ENCODE measurements at regions of chr19 and their contacts with region 1.

Region 1: DNA sequence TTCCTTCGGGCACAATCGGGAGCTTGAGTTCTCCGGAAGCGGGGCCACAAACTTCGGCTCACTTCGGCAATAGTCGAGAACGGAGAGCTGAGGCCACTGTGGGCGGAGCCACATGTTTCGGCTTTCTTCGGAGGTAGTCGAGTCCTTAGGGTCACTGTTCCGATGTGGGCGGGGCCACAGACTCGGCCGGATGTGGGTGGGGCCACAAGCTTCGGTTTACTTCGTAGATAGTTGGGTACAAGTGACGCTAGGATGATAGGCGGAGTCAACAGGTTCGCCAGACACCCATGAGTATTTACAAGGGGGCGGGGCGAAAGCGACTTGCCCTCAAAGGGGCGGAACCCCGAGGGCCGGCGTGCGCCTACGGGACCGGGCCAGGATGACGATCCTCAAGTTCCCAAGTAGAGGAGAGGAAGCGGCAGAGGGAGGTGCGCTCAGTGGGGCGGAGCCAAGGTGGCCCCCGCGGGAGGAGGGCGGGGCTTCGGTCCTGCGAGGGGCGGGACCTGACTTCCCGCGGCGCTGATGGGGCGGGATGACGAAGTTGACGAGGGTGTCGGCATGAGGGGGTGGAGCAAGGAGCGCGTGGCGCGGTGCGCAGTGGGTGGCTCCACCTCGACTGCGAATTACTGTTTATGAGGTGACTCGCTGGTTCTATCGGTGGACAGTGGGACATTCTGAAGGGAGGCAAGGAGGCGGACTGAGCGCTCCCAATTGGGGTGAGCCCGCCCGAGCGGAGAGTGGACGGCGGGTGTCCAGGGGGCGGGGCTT is 539 bp upstream of the MBOAT7 start:
- DNase-seq: peak; percentile 100
- ATAC-seq: peak; percentile 69
- H3K4me3 Mint-ChIP-seq: peak overlapping the region; percentile 76
- H3K27ac Mint-ChIP-seq: peak overlapping the region; percentile 96
- H3K4me1 Mint-ChIP-seq: peaks cover 34% of the 10 kb centered on the region
- H3K27me3 Mint-ChIP-seq: no peaks in the 10 kb centered on the region

Region 2: DNA sequence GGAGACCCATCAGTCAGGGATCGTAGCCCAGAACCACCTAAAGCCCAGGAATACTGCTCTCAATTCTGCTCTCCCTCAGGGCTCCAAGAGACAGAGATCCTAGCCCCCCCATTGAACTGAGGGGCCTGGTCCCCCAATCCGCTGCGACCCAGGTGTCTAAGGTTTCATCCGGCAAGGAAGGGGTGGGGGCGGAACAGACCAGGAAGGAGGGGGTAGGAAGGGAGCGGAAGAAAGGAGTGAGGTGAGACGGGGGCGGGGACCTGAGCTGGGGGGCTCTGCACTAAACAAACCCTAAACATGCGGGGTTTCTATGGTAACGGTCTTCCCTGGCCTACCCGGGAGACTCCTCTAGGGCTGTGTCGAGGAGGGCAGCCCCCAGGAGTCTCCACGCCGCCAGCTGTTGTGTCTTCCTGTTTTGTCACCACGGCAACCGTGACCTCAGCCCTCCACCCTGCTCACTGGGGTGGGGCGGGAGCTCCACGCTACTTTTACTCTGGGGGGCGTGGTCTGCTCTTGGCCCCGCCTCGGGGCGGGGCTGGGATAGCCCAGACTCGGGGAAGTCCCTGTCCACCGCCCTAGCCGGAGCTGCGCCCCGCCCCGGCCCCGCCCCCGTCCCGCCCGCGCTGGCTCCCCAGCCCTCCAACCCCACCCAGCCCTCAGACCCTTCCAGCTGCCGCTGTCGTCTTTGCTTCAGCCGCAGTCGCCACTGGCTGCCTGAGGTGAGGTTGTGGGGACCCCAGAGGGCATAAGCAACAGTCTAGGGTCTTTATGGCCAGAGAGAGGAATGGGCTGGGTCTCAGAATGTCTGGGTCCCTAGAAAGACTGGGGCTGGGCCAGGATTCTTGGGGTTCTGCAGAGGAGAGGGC is 322.5 kb before region 1 on chr19 and contains the start of gene MYADM:
- CTCF ChIA-PET with region 1: no interaction called
- POLR2A ChIA-PET with region 1: interaction called, 3 read pairs
- intact Hi-C with region 1: loop called (anchors 1 to 5 kb)
- DNase-seq: peak; percentile 99
- ATAC-seq: peak; percentile 71
- H3K4me3 Mint-ChIP-seq: peak within 1 kb of the TSS; percentile 91
- H3K27ac Mint-ChIP-seq: peak within 1 kb of the TSS; percentile 88
- H3K4me1 Mint-ChIP-seq: peaks cover 32% of the 10 kb centered on the region
- H3K27me3 Mint-ChIP-seq: no peaks in the 10 kb centered on the region
- total RNA-seq, gene MYADM: 46.4 to 54.6 TPM

Region 3: DNA sequence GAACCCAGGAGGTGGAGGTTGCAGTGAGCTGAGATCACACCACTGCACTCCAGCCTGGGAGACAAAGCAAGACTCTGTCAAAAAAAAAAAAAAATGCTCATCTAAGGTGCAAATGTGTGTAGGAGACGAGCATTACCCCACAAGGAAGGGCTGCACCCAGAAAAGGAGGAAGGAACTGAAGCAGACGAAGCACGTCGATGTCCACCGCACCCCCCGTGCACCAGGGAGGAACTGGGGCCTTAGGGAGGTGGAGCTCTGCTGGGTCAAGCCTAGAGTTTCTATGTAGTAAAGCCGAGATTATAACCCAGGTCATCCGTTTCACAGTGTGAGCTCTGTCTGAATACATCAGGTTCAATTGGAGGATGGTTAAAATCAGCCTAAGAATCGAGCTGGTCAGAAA is 127.3 kb before region 1 on chr19:
- CTCF ChIA-PET with region 1: no interaction called
- POLR2A ChIA-PET with region 1: no interaction called
- intact Hi-C with region 1: no loop called
- DNase-seq: no peak
- ATAC-seq: no peak
- H3K4me3 Mint-ChIP-seq: no peak overlapping the region
- H3K27ac Mint-ChIP-seq: no peak overlapping the region
- H3K4me1 Mint-ChIP-seq: no peaks in the 10 kb centered on the region
- H3K27me3 Mint-ChIP-seq: peaks cover 11% of the 10 kb centered on the region

Region 4: DNA sequence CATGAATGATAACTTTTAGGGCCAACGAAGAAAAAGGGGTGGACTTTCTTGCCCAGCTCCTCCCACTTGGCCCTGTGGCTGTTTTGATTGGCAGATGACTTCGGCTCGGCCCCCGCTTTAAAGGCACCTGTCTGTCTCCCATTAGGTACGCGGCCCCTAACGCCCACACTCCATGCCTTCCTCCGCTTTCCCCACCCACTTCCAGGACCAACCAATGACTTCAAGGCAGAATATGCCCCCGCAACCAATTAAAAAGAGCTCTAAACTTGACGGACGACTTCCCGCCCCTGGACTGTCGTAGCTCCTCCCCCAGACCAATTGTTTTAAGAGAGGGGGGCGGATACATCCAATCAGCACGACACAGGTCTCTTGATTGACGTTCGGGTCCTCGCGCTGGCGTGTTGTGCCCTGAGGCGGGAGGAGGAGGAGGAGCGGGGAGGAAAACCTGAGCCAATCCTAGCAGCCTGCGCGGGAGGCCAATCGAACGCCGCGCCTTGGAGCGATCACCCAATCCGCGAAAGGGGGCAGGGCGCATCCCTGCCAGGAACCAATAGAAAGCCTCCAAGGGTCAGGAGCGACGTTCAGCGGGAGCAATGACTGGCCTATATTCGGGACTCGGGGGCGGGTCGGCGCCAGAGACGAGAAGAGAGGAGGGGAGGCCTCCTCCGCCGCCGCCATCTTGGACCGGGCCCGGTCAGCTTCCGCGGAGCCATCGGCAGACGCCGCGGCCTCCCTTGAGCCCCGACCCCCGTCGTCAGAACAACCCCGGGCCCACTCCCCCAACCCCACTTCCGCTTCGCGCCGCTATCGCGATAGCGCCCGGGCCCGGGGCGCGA is 52.6 kb before region 1 on chr19 and contains the start of gene CNOT3:
- CTCF ChIA-PET with region 1: interaction called, 6 read pairs
- POLR2A ChIA-PET with region 1: interaction called, 35 read pairs
- intact Hi-C with region 1: loop called (anchors 1 kb)
- DNase-seq: peak; percentile 99
- ATAC-seq: peak; percentile 86
- H3K4me3 Mint-ChIP-seq: peak within 1 kb of the TSS; percentile 83
- H3K27ac Mint-ChIP-seq: peak within 1 kb of the TSS; percentile 91
- H3K4me1 Mint-ChIP-seq: peaks cover 44% of the 10 kb centered on the region
- H3K27me3 Mint-ChIP-seq: no peaks in the 10 kb centered on the region
- total RNA-seq, gene CNOT3: 61.0 to 93.8 TPM

Region 5: DNA sequence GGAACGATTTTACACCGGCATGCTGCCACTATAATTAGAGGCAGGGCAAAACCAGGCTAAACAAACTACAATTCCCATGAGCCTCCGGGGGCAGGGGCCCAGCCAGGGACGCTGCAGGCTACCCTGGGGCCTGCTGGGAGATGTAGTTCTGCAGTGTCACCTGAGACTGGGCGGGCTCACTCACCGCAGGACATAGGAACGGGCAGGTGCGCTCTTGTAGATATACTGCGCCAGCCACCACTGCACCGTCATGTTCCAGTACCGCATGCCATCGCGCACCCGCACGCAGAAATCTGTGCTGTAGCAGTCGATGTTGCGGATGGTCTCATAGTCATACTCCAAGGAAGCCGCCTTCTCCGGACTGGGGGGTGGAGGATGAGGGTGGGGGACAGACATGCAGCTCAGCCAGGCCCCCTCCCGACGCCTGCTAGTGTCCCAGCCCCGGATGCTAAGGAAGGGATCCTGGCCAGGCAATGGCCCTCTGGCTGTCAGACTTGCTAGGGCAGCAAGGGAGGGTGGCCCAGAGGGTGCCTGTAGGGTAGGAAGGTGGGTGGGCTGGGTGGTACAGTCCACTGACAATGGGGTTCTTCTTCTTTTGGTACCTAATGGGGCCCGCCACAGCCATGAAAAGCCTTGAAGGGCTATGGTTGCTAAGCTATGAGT is 11.2 kb before region 1 on chr19:
- CTCF ChIA-PET with region 1: interaction called, 4 read pairs
- POLR2A ChIA-PET with region 1: interaction called, 5 read pairs
- intact Hi-C with region 1: loop called (anchors 1 to 2 kb)
- DNase-seq: peak; percentile 69
- ATAC-seq: peak; percentile 94
- H3K4me3 Mint-ChIP-seq: no peak overlapping the region
- H3K27ac Mint-ChIP-seq: no peak overlapping the region
- H3K4me1 Mint-ChIP-seq: no peaks in the 10 kb centered on the region
- H3K27me3 Mint-ChIP-seq: no peaks in the 10 kb centered on the region

Region 6: DNA sequence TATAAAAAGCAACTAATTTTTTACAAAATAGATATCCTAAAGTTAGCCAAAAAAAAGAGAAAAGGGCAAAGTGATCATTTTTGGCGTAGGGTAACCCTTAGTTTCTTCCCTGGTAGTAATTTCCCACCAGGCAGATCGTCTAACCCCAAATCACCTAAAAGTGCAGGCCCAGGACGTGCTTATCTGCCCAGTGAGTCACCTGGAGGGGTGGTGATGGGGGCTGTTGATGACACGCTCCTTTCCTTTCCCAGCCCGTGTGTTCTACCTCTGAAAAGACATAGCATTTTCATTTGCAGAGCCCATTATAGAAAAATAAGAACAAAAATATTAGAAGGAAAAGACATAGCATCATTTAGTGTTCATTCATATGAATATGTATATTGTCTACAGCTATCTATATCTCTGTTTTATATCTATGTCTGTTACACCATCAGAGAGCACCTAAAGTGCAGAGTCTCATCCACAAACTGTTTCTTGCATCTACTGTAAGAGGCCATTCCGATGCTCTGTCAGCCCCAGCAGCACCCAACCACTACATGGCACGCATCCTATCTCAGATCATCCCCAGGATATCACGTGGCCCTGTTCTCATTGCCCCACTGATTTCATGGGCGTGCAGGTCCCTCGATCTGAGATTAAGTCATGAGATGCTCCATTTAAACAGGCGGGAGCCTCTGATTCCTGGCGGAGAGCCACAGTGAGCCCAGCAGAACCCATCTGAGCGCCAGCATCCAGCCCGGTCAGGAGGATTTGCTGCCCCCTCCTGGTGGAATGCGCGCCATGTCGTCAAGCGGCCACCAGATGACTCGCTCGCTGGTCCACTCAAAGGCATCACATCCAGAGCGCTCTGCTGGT is 41.4 kb after region 1 on chr19:
- CTCF ChIA-PET with region 1: interaction called, 4 read pairs
- POLR2A ChIA-PET with region 1: no interaction called
- intact Hi-C with region 1: loop called in 1 of 2 experiments (anchors 1 kb)
- DNase-seq: peak; percentile 92
- ATAC-seq: peak; percentile 99
- H3K4me3 Mint-ChIP-seq: no peak overlapping the region
- H3K27ac Mint-ChIP-seq: no peak overlapping the region
- H3K4me1 Mint-ChIP-seq: peaks cover 6% of the 10 kb centered on the region
- H3K27me3 Mint-ChIP-seq: peaks cover 22% of the 10 kb centered on the region

Region 7: DNA sequence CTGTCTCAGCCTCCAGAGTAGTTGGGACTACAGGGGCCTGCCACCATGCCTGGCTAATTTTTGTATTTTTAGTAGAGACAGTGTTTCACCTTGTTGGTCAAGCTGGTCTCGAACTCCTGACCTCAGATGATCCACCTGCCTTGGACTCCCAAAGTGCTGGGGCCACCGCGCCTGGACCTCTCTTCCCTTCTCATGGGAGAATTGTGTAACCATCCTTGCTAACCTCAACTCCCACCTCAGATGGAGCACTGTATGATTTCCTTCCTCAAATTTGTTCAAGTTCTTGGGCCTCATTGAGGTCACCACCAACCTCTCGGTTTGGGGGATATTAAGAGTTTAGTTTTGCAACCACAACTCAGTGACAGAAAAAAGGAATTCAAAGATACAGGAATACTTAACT is 112.3 kb after region 1 on chr19:
- CTCF ChIA-PET with region 1: no interaction called
- POLR2A ChIA-PET with region 1: no interaction called
- intact Hi-C with region 1: no loop called
- DNase-seq: no peak
- ATAC-seq: no peak
- H3K4me3 Mint-ChIP-seq: no peak overlapping the region
- H3K27ac Mint-ChIP-seq: no peak overlapping the region
- H3K4me1 Mint-ChIP-seq: peaks cover 27% of the 10 kb centered on the region
- H3K27me3 Mint-ChIP-seq: no peaks in the 10 kb centered on the region

Region 8: GRCh38 chr19:55279770-55280643 is 1090.1 kb after region 1 on chr19 and contains the start of gene HSPBP1:
- CTCF ChIA-PET with region 1: no interaction called
- POLR2A ChIA-PET with region 1: no interaction called
- intact Hi-C with region 1: loop called in 1 of 2 experiments (anchors 1 kb)
- DNase-seq: peak; percentile 98
- ATAC-seq: peak; percentile 92
- H3K4me3 Mint-ChIP-seq: peak within 1 kb of the TSS; percentile 100
- H3K27ac Mint-ChIP-seq: peak within 1 kb of the TSS; percentile 98
- H3K4me1 Mint-ChIP-seq: peaks cover 24% of the 10 kb centered on the region
- H3K27me3 Mint-ChIP-seq: no peaks in the 10 kb centered on the region
- total RNA-seq, gene HSPBP1: 41.1 to 45.2 TPM

Measured in activated CD4-positive, alpha-beta T cell treated with anti-CD3 and anti-CD28 coated beads for 36 hours (primary cell).